Activated CD4-positive, alpha-beta T cell treated with anti-CD3 and anti-CD28 coated beads, Interleukin-2, amount 10 ng/mL, durations not matched to agents 24 days and 14 days (primary cell): ENCODE measurements at regions of chr17 and their contacts with region 1.

Region 1: DNA sequence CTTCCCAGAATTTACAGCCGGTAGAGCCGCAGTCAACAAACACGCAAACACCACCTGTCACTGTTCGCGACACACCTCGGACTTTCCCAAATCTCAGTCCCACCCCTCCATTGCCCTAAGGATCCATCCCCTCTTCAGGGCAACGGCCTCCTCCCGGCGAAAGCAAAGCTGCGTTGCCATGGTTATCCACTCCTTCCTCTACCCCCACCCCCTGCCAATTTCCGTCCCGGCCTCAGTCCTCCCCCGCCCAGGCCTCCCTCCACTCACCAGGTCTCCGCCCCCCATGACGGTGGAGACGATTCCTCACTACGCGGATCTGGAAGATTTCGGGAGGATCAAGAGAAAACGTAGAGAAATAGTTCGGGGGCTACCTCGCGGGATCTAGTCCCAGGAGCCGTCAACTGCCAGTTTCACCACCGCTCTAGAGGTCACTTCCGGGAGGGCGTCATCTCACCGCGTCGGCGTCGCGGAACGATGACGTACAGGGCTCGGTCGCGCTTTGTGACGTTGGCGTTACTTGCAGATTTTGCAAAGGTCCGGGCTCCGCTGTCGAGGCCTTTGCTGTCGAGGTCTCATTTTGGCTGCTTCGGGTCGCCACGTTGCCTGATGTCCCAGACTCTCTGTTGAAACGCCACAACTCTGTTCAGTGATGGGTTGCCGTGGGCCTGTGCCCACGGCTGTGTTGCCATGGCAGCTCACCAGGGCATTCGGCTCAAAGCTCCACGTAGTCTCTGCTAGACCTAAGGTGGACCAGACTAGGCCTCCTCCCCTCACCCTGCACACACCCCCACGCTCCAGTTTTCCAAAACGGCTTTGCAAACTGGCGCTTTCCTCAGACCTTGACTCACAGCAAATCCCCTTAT is at the start of gene CWC25:
- DNase-seq: peak; percentile 100
- H3K4me3 Mint-ChIP-seq: peak within 1 kb of the TSS; percentile 98
- H3K27ac Mint-ChIP-seq: peak within 1 kb of the TSS; percentile 100
- H3K4me1 Mint-ChIP-seq: peaks cover 35% of the 10 kb centered on the region
- H3K27me3 Mint-ChIP-seq: no peaks in the 10 kb centered on the region
- total RNA-seq, gene CWC25: 32.1 and 32.4 TPM in 2 replicates

Region 2: DNA sequence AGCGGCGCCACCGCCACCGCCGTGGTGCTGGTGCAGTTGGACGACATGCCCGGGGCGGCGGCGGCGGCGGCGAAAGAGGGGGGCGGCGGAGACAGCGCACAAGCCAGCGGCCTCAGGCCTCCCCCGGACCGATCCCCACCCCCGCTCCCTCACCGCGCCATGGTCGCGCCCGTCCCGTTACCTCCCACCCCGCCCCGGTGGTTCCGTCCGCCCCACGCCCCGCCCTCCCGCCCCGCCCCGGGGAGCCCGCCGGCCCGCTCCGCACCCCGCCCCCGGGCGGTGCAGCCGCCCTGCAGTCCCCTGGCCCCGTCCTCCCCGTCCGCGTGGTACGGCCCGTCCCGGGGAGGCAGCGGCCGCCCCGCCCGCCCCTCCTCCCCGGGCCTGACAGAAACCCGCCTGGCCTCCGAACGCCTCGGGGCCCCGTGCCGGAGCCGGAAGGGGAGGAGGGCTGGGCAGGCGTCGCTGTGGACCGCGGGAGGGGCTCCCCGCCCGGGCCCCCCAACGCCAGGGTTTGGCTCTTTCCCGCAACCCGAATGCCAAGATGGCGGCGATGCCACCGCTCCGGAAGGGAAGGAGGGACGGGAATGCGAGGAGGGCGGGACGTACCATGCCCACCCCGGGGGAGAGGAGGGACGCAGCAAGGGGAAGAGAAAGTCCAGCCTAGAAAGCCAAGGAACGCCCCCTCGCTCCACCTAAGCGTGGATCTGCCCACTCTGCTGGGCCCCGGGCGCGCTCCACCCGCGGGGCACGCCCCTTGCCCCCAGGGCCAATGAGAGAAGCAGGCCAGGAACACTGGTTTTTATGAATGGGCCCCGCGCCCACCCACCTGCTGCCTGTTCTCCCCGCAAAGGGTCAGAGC is 25.5 kb before region 1 on chr17 and contains the start of gene PIP4K2B:
- intact Hi-C with region 1: loop called (anchors 1 kb)
- DNase-seq: peak; percentile 97
- H3K4me3 Mint-ChIP-seq: peak within 1 kb of the TSS; percentile 95
- H3K27ac Mint-ChIP-seq: peak within 1 kb of the TSS; percentile 96
- H3K4me1 Mint-ChIP-seq: peaks cover 36% of the 10 kb centered on the region
- H3K27me3 Mint-ChIP-seq: no peaks in the 10 kb centered on the region
- total RNA-seq, gene PIP4K2B: 42.8 and 44.3 TPM in 2 replicates

Region 3: GRCh38 chr17:38853292-38854219 is 28.4 kb after region 1 on chr17 and contains the start of gene RPL23:
- intact Hi-C with region 1: loop called (anchors 1 kb)
- DNase-seq: peak; percentile 97
- H3K4me3 Mint-ChIP-seq: peak within 1 kb of the TSS; percentile 91
- H3K27ac Mint-ChIP-seq: peak within 1 kb of the TSS; percentile 98
- H3K4me1 Mint-ChIP-seq: peaks cover 30% of the 10 kb centered on the region
- H3K27me3 Mint-ChIP-seq: no peaks in the 10 kb centered on the region
- total RNA-seq, gene RPL23: 1,994 and 2,005 TPM in 2 replicates

Region 4: GRCh38 chr17:38898812-38899348 is 73.8 kb after region 1 on chr17:
- intact Hi-C with region 1: loop called (anchors 2 kb)
- DNase-seq: peak; percentile 93
- H3K4me3 Mint-ChIP-seq: peak overlapping the region; percentile 75
- H3K27ac Mint-ChIP-seq: peak overlapping the region; percentile 91
- H3K4me1 Mint-ChIP-seq: peaks cover 46% of the 10 kb centered on the region
- H3K27me3 Mint-ChIP-seq: no peaks in the 10 kb centered on the region